Left cardiac atrium (tissue), 4 donors: ENCODE measurements at regions of chr3 and their contacts with region 1.

Region 1: GRCh38 chr3:197516517-197516889 is 39.3 kb downstream of the BDH1 start:
- DNase-seq: no peak
- ATAC-seq: no peak

Region 2: GRCh38 chr3:197224034-197224444 is 292.5 kb before region 1 on chr3:
- intact Hi-C with region 1: loop called in 1 of 2 experiments (anchors 10 kb)
- DNase-seq: no peak
- ATAC-seq: peak; percentile 41 to 50

Region 3: DNA sequence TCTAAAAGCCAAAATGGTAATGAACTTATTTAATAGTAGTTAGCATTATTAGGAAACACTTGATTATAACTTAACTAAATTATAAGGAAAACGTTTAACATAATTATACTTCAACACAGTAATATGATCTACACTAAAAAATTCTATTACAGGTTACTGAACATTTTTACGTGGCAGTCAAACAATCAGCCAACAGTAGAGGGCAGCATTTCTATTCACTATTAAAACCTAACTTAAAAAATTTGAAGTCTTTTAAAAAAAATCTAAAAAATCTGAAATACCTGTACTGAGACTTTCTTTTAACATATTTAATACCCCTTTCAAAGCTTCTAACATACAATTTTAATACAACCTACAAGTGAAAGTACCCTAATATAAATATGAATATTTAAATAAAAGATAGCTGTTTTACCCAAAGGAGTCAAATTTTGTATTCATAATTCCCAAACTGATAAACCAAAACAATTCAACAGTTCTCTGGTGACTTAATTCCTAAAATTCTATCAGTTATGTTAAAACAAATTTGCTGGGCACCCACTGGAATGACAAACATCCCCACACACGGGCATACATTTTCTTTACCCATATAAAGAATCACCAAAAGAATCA is 259.6 kb before region 1 on chr3:
- intact Hi-C with region 1: loop called (anchors 2 to 10 kb)
- DNase-seq: no peak
- ATAC-seq: no peak